Left cardiac atrium (tissue), 4 donors: ENCODE measurements at regions of chr4 and their contacts with region 1.

Region 1: DNA sequence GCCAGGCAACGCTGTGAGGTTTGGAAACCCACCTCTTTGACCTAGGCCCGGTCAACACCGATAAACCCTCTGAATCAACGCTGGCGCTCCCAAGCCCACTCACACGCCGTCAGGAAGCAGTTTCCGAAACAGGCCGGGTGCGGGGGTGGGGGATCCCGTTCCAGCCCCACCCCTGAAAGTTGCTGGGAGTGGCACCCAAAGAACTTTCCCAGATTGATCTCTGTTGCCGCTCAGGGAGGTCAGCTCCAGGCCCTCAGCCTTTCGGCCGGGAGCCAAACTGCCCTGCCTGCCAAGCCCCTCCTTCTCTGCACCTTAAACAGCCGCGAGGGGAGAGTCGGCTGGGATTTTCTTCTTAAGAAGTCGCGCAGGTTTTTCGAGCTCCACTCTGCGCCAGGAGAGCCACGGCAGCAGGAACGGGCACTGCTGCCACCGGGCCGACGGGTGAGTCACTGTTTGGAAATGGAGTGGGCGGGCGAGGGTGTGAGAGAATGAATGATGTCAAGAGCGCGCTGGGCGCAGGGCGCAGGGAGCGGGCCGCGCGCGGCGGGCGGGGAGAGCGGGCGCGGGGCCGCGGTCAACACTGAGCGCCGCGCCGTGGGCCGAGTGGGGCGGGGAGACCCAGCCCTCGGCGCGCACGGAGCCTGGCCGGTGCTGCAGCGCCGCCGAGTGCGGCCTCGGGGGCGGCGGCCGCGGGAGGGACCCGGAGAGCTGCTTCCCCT is at the start of gene SGMS2:
- DNase-seq: peak; percentile 93
- ATAC-seq: peak; percentile 96 to 97
- total RNA-seq, gene SGMS2: 27.5 to 39.6 TPM

Region 2: GRCh38 chr4:107709916-107710315 is 114.6 kb before region 1 on chr4:
- intact Hi-C with region 1: no loop called
- DNase-seq: no peak
- ATAC-seq: peak in 1 of 2 donors; percentile 58

Region 3: GRCh38 chr4:107853444-107854355 is 29.2 kb after region 1 on chr4:
- intact Hi-C with region 1: loop called in 1 of 2 experiments (anchors 2 kb)
- DNase-seq: no peak
- ATAC-seq: peak; percentile 60 to 88

Region 4: GRCh38 chr4:107870916-107871786 is 46.6 kb after region 1 on chr4:
- intact Hi-C with region 1: no loop called
- DNase-seq: no peak
- ATAC-seq: peak in 1 of 2 donors; percentile 89

Region 5: DNA sequence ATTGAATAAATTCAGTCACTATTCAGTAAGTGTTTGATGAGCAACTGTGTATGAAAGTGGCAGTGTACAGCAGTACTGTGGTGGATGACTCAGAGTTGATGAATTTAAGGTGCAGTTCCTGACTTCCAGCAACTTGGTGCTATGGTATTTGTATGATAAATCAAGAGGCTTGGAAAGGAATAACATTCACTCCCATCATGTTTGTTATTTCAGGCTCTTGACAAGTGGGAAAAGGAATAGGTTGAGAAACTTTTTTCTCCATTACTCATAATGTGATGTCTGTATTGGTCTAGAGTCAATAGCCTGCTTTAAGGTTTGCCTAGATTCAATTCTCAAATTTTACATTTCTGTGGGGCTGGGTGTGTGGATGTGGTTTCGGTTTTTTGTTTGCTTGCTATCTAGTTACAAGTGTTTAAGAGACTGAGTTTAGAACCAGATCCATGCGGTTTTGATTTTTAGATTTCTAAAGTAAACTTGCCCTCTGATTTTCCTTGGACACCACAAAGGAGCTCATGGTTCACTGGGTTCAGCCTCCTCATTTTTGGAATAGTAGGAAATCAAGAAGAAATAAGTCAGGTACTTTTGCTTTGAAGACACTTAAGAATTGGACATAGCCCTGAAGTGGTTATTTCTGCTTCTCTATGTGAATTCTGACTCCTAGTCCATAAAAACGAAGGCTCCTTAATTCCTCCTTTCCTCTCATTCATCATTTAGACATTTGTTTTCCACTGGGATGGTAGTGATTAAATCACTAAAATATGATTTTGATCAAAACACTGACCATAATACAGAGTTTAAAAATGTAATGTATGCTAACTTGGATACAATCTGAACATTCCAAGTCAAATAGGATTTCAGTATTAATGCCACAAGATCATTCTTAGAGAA is 71.9 kb after region 1 on chr4:
- intact Hi-C with region 1: loop called (anchors 5 to 10 kb)
- DNase-seq: no peak
- ATAC-seq: peak; percentile 68 to 96

Region 6: GRCh38 chr4:107913281-107913899 is 88.9 kb after region 1 on chr4:
- intact Hi-C with region 1: loop called in 1 of 2 experiments (anchors 5 kb)
- DNase-seq: no peak
- ATAC-seq: peak; percentile 78 to 88